ENCODE measurements at regions of chr6 and their contacts with region 1.

Region 1: DNA sequence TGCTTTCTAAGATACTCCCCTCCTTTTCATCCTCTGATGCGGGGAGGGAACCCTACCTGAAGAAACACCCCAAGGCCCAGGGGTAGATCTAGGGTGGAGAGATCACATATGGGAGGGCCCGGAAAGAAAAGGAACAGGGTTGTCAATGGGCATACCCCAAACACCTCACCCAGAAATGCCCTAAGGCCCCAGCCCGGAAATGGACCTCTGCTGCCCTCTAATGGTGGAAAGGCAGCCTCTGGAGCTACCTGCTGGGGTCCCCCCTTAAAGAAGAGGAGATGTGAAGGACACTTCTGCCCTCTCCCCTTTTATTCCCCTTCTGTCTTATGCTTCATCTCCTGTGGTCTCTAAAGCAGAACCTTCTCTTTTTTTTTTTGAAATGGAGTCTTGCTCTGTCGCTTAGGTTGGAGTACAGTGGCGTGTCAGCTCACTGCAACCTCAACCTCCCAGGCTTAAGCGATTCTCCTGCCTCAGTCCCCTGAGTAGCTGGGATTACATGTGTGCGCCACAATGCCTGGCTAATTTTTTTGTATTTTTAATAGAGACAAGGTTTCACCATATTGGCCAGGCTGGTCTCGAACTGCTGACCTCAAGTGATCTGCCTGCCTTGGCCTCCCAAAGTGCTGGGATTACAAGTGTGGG is 458 bp upstream of the ARMC12 start:
- DNase-seq: peak; percentile 81 to 87 (median 85)
- H3K4me3 ChIP-seq: no peak overlapping the region
- H3K27ac ChIP-seq: no peak overlapping the region
- H3K4me1 ChIP-seq: peaks cover 3 to 24% (median 18%) of the 10 kb centered on the region in 3 donors
- H3K27me3 ChIP-seq: no peaks in the 10 kb centered on the region
- CTCF ChIP-seq: peak; percentile 89

Region 2: DNA sequence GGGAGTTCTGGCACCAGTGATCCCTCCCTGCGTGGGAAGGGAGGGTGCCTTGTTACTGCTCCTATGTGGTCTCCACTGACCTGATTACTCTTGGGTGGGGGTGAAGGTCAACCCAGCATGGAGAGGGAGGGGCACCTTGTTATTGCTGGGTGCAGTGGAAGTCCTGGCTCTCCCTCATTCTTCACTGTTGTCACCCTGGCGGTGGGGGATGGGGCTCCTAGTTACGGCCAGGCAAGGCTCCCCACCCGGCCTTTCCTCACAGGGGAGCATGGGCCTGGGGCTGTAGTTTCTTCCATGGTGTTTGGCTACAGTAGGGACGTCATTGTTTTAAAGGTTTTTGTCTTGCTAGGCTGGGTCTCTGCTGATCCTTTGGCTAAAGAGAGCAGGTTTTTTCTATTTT is 1229.7 kb before region 1 on chr6:
- intact Hi-C with region 1: no loop called
- DNase-seq: peak in 1 of 5 donors; percentile 37
- H3K4me3 ChIP-seq: no peak overlapping the region
- H3K27ac ChIP-seq: no peak overlapping the region
- H3K4me1 ChIP-seq: no peaks in the 10 kb centered on the region
- H3K27me3 ChIP-seq: no peaks in the 10 kb centered on the region
- CTCF ChIP-seq: no peak

Region 3: DNA sequence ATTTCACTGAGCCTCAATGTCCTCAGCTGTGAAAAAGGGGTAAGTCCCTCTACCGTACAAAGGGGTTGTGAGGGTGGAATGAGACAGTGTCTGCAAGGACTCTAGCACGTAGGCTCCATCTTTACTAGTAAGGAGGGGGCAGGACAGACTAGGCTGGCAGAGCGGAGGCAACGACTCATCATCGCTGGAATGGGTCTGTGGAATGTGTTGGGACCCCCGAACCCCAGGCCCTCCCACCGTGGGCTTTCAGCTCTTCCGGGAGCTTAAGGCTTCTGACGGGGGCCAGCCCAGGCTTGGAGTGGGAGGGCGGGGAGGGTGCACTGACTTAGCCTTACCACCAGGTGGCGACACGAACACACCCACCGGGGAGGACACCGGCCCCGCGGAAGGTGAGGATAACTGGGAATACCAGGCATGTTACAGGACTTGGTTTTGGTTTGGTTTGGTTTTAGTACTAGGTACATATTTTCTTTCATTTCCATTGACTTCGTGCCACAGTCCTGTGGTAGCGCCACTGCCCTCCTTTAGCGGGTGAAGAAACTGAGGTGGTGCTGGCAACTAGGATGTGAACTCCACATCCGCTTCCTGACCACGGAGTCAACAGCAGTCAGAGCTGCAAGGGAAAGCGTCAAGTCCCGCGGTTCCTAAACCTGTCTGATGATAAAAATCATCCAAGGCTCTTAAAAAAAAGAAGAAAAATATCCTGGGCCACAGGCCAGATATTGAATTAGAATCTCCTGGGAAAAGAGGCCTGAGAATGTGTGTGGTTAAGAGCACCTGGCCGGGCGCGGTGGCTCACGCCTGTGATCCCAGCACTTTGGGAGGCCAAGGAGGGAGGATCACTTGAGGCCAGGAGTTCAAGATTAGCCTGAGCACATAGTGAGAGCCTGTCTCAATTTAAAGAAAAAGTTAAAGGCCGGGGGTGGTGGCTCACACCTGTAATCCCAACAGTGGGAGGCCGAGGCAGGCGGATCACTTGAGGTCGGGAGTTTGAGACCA is 213.4 kb before region 1 on chr6:
- intact Hi-C with region 1: loop called (anchors 5 kb)
- DNase-seq: peak; percentile 73 to 88 (median 80)
- H3K4me3 ChIP-seq: peak overlapping the region in 2 of 3 donors; percentile 15 to 52
- H3K27ac ChIP-seq: no peak overlapping the region
- H3K4me1 ChIP-seq: peaks cover 0 to 2% (median 0%) of the 10 kb centered on the region in 3 donors
- H3K27me3 ChIP-seq: no peaks in the 10 kb centered on the region
- CTCF ChIP-seq: peak; percentile 93

Region 4: GRCh38 chr6:35583893-35584688 is 152.3 kb before region 1 on chr6:
- intact Hi-C with region 1: loop called (anchors 5 kb)
- DNase-seq: peak in 4 of 5 donors; percentile 72 to 89 (median 82)
- H3K4me3 ChIP-seq: no peak overlapping the region
- H3K27ac ChIP-seq: peak overlapping the region in 1 of 2 donors; percentile 10
- H3K4me1 ChIP-seq: peaks cover 0 to 10% (median 0%) of the 10 kb centered on the region in 3 donors
- H3K27me3 ChIP-seq: no peaks in the 10 kb centered on the region
- CTCF ChIP-seq: peak; percentile 89

Region 5: DNA sequence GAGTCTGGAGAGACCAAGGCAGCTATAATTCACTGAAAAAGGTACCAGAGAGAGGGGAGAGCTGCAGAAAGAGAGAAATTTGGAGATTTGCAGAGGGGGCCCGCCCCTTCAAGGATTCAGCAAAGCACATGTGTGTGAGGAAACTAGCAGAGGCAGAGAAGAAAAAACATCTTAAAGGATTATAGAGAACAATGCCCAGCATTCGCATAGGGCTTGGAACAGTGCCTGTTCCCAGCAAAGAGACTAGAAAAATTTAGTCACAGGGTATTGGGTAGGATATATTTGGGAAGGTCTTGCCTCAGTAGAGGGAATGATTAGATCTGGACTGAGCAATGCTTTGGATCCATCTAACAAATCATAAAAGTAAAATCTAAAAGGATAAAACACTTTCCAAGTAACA is 140.5 kb after region 1 on chr6:
- intact Hi-C with region 1: no loop called
- DNase-seq: no peak
- H3K4me3 ChIP-seq: no peak overlapping the region
- H3K27ac ChIP-seq: no peak overlapping the region
- H3K4me1 ChIP-seq: no peaks in the 10 kb centered on the region
- H3K27me3 ChIP-seq: no peaks in the 10 kb centered on the region
- CTCF ChIP-seq: no peak